Panc1 (cell line): ENCODE measurements at regions of chr19 and their contacts with region 1.

Region 1: DNA sequence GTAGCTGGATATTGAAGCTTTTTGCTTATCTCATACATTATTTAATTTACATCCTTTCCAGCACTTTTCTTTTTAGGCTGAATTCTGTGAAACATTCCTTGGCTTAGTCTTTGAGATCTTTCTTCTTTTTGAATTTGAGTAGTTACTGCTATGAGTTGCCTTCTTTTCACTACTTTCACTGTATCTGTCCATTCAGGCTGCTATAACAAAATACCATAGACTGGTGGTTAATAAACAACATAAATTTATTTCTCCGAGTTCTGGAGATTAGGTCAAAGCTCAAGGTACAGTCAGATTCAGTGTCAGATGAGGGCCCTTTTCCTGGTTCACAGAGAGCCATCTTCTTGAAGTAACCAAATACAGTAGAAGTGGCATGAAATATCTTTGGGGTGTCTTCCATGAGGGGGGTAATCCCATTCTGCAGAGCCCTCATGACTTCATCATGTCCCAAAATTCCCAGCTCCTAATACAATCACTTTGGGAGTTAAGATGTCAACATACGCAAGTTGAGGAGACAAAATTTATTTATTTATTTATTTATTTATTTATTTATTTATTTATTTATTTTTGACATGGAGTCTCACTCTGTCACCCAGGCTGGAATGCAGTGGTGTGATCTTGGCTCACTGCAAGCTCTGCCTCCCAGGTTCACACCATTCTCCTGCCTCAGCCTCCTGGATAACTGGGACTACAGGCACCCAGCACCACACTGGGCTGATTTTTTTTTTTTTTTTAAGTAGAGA is 15.7 kb downstream of the ZNF846 start:
- DNase-seq: no peak
- ATAC-seq: no peak
- H3K4me3 ChIP-seq: no peak overlapping the region
- H3K27ac ChIP-seq: no peak overlapping the region
- H3K4me1 ChIP-seq: no peaks in the 10 kb centered on the region
- H3K27me3 ChIP-seq: no peaks in the 10 kb centered on the region
- CTCF ChIP-seq: no peak

Region 2: GRCh38 chr19:9641810-9642209 is 111.1 kb before region 1 on chr19:
- CTCF ChIA-PET with region 1: no interaction called
- POLR2A ChIA-PET with region 1: no interaction called
- in situ Hi-C with region 1: no loop called
- intact Hi-C with region 1: no loop called
- DNase-seq: no peak
- ATAC-seq: no peak
- H3K4me3 ChIP-seq: no peak overlapping the region
- H3K27ac ChIP-seq: no peak overlapping the region
- H3K4me1 ChIP-seq: no peaks in the 10 kb centered on the region
- H3K27me3 ChIP-seq: no peaks in the 10 kb centered on the region
- CTCF ChIP-seq: no peak

Region 3: GRCh38 chr19:9727644-9728043 is 25.2 kb before region 1 on chr19:
- CTCF ChIA-PET with region 1: no interaction called
- POLR2A ChIA-PET with region 1: interaction called, 11 read pairs
- in situ Hi-C with region 1: no loop called
- intact Hi-C with region 1: no loop called
- DNase-seq: no peak
- ATAC-seq: no peak
- H3K4me3 ChIP-seq: no peak overlapping the region
- H3K27ac ChIP-seq: no peak overlapping the region
- H3K4me1 ChIP-seq: no peaks in the 10 kb centered on the region
- H3K27me3 ChIP-seq: no peaks in the 10 kb centered on the region
- CTCF ChIP-seq: no peak

Region 4: DNA sequence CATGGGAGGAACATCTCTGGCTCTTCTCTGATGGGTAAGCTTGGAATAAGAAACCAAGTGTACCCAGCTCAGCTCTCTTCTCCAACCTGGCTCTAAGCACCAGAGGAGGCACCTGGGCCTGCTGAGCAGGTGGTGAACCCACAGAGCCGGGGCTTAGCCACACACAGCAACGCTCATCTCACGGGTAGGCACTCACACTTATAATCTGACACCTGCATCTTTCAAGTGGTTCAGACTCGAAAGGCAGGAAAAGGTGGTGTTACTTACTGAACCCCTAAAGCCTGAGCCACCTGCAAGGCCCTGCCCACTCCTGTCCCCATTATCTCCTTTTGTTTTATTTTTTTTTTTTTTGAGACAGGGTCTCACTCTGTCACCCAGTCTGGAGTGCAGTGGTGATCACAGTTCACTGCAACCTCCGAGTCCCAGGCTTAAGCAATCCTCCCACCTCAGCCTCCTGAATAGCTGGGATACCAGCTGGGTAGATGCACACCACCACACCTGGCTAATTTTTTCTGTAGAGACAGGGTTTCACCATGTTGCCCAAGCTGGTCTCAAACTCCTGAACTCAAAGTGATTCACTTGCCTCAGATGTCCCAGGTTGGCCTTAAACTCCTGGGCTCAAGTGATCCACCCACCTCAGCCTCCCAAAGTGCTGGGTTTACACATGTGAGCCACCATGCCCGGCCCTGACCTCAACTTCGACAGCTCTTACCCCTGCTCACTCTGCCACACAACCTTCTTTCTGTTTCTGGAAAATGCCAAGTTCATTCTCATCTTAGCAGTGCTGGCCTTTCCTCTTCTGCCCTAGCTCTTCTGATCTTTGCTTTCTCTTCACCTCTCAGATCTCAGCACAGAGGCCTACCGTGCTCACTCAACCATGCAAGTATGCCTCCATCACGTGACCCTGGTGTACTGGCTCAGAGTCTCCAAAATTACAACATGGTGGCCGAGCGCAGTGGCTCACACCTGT is 56.3 kb after region 1 on chr19:
- CTCF ChIA-PET with region 1: no interaction called
- POLR2A ChIA-PET with region 1: no interaction called
- in situ Hi-C with region 1: no loop called
- intact Hi-C with region 1: no loop called
- DNase-seq: no peak
- ATAC-seq: no peak
- H3K4me3 ChIP-seq: no peak overlapping the region
- H3K27ac ChIP-seq: no peak overlapping the region
- H3K4me1 ChIP-seq: no peaks in the 10 kb centered on the region
- H3K27me3 ChIP-seq: no peaks in the 10 kb centered on the region
- CTCF ChIP-seq: no peak